ENCODE measurements at regions of chr19 and their contacts with region 1.

Region 1: GRCh38 chr19:680287-681028 is 4.3 kb downstream of the FSTL3 start:
- H3K4me3 Mint-ChIP-seq: peak overlapping the region; percentile 94
- H3K27ac Mint-ChIP-seq: peak overlapping the region; percentile 98
- H3K4me1 Mint-ChIP-seq: peaks cover 35% of the 10 kb centered on the region
- H3K27me3 Mint-ChIP-seq: peaks cover 32% of the 10 kb centered on the region

Region 2: DNA sequence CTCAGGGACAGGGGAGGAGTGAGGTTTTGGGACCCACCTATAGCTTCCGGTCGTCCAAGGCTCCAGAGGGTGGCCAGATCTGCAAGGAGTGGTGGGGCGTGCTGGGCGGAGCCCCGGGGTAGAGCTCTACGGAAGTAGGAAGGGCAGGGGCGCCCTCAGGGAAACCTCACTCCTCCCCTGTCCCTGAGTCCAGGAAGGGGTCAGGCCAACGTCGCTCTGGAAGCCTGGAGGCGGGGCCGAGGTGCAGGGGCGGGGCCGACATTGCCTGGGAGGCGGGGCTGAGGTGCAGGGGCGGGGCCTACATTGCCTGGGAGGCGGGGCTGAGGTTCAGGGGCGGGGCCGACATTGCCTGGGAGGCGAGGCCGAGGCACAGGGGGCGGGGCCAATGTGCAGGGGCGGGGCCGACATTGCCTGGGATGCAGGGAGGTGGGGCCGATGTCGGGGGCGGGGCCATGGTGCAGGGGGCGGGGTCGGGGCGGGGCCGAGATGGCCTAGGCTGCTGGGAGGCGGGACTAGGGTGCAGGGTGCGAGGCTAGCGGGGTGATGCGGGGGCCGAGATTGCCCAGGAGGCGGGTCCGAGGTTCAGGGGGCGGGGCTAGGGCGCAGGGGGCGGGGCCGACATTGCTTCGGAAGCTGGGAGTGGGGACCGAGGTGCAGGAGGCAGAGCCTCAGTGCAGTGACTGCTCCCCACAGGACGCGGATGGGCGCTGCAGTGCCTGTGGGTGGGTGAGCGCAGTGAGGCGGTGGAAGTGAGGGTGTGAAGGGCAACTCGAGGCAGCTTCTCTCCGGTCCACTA is 23.4 kb after region 1 on chr19:
- intact Hi-C with region 1: loop called (anchors 1 kb)
- H3K4me3 Mint-ChIP-seq: peak overlapping the region; percentile 92
- H3K27ac Mint-ChIP-seq: peak overlapping the region; percentile 85
- H3K4me1 Mint-ChIP-seq: peaks cover 38% of the 10 kb centered on the region
- H3K27me3 Mint-ChIP-seq: peaks cover 21% of the 10 kb centered on the region